ENCODE measurements at regions of chr10 and their contacts with region 1.

Region 1: DNA sequence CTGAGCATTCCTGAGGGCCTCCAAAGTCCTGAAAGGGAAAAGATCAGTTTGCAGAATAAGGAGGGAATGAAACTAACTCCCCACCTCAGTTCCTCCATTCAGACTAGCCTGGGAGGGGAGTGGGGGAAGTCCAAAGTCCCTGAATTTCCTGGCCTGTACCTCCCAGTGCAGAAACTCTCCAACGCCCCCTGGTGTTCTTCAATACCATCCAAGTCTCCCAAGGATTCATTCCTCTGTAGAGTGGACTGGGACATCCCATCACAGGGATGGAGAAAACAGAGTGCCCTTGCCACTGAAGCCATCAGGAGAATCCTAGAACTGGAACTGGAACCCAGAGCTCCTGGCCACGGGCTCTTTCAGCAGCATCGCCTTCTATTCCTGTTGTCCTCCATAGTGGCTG is 1.6 kb upstream of the COL13A1 start:
- DNase-seq: peak; percentile 71 to 72
- ATAC-seq: peak; percentile 70 to 85; a peak in 5 of 6 replicates
- H3K4me3 ChIP-seq: no peak overlapping the region
- H3K27ac ChIP-seq: no peak overlapping the region
- H3K4me1 ChIP-seq: peaks cover 9% of the 10 kb centered on the region; the same call in 2 of the 3 replicates
- CTCF ChIP-seq: peak; percentile 72
- EP300 ChIP-seq: no peak
- POLR2A ChIP-seq: no peak
- RAD21 ChIP-seq: peak; percentile 53 to 72

Region 2: GRCh38 chr10:69696073-69696731 is 103.9 kb before region 1 on chr10:
- CTCF ChIA-PET with region 1: interaction called, 20 read pairs
- POLR2A ChIA-PET with region 1: interaction called, 4 read pairs
- DNase-seq: peak; percentile 84 to 90
- ATAC-seq: peak; percentile 94
- H3K4me3 ChIP-seq: no peak overlapping the region
- H3K27ac ChIP-seq: no peak overlapping the region
- H3K4me1 ChIP-seq: 0 out of 3 replicates have a peak, but pooled peaks cover 3% of the 10 kb centered on the region
- CTCF ChIP-seq: peak; percentile 83
- EP300 ChIP-seq: no peak
- POLR2A ChIP-seq: no peak
- RAD21 ChIP-seq: peak; percentile 62 to 67

Region 3: DNA sequence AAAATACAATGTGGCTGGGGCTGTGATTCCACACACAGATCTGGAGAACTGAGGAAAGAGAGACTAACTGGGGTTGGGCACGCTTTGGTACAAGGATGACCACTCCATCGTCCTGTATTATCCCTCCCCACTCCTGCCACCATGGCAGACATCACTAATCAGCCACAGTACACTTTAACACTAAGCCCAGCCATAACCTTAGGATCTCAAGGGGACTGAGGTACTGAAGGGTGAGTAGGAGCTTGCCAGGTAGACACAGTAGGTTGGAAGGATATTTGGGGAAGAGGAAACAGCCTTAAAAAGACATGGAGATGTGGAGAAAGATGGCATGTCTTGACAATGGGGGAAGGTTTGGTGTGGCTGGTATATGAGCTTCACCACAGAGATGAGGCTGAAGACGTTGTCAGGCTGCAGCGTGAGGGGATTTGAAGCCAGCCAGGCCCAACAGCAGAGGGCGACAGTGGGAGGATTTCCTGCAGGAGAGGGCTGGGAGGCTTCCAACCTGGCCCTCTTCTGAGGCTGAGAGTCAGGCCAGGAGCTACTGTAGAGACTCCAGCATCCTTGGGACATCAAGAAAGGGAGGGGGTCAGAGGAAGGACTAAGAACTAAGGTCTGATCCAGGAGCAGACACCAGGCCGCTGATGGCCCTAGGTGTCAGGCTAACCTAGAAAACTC is 57.0 kb before region 1 on chr10:
- CTCF ChIA-PET with region 1: interaction called, 14 read pairs
- POLR2A ChIA-PET with region 1: no interaction called
- DNase-seq: peak in 1 of 2 experiments; percentile 43
- ATAC-seq: peak; percentile 56 to 91; a peak in 5 of 6 replicates
- H3K4me3 ChIP-seq: no peak overlapping the region
- H3K27ac ChIP-seq: no peak overlapping the region
- H3K4me1 ChIP-seq: no peaks in the 10 kb centered on the region
- CTCF ChIP-seq: peak; percentile 39
- EP300 ChIP-seq: no peak
- POLR2A ChIP-seq: no peak
- RAD21 ChIP-seq: peak; percentile 33 to 60; a peak in 3 of 5 replicates

Region 4: GRCh38 chr10:69769395-69769992 is 30.6 kb before region 1 on chr10:
- CTCF ChIA-PET with region 1: interaction called, 32 read pairs
- POLR2A ChIA-PET with region 1: no interaction called
- DNase-seq: peak; percentile 70 to 84
- ATAC-seq: peak; percentile 92 to 96
- H3K4me3 ChIP-seq: no peak overlapping the region
- H3K27ac ChIP-seq: peak overlapping the region; percentile 77 to 84
- H3K4me1 ChIP-seq: peaks cover 25% of the 10 kb centered on the region
- CTCF ChIP-seq: no peak
- EP300 ChIP-seq: no peak
- POLR2A ChIP-seq: no peak
- RAD21 ChIP-seq: no peak

Region 5: DNA sequence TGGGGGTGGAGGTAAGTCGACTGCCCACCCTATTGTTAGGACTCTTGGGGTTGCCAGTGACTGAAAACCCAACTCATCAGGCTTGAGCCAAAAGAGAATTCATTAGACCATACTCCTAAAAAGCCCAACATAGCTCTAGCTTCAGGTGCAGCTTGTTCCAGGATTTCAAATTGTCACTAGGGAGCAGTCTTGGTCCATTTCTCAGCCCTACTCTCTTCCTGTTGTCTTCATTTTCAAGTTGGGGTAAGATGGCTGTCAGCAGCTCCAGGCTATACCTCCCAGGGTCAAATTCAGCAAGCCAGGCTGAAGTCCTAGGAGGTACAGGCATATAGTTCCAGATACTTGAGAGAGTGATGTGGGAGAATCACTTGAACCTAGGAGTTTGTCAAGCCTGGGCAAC is 13.3 kb before region 1 on chr10:
- CTCF ChIA-PET with region 1: interaction called, 104 read pairs
- POLR2A ChIA-PET with region 1: no interaction called
- DNase-seq: peak in 1 of 2 experiments; percentile 31
- ATAC-seq: peak; percentile 76 to 87; a peak in 4 of 6 replicates
- H3K4me3 ChIP-seq: no peak overlapping the region
- H3K27ac ChIP-seq: no peak overlapping the region
- H3K4me1 ChIP-seq: no peaks in the 10 kb centered on the region
- CTCF ChIP-seq: peak; percentile 33; the same call in 2 of the 3 replicates
- EP300 ChIP-seq: no peak
- POLR2A ChIP-seq: no peak
- RAD21 ChIP-seq: peak; percentile 63 to 71

Measured in A549 (cell line).